Right ventricle myocardium superior (tissue), 1 donor: ENCODE measurements at regions of chrX and their contacts with region 1.

Region 1: GRCh38 chrX:18886344-18887161 is 97.4 kb downstream of the PHKA2 start:
- DNase-seq: peak; percentile 84
- ATAC-seq: peak; percentile 70

Region 2: GRCh38 chrX:18360867-18361266 is 525.7 kb before region 1 on chrX:
- intact Hi-C with region 1: no loop called
- DNase-seq: no peak
- ATAC-seq: no peak

Region 3: GRCh38 chrX:18674788-18675735 is 211.5 kb before region 1 on chrX:
- intact Hi-C with region 1: loop called (anchors 10 kb)
- DNase-seq: peak; percentile 83
- ATAC-seq: peak; percentile 96